Activated B cell treated with CpG ODN at 0.5 μM for 24 hours (primary cell): ENCODE measurements at regions of chr14 and their contacts with region 1.

Region 1: DNA sequence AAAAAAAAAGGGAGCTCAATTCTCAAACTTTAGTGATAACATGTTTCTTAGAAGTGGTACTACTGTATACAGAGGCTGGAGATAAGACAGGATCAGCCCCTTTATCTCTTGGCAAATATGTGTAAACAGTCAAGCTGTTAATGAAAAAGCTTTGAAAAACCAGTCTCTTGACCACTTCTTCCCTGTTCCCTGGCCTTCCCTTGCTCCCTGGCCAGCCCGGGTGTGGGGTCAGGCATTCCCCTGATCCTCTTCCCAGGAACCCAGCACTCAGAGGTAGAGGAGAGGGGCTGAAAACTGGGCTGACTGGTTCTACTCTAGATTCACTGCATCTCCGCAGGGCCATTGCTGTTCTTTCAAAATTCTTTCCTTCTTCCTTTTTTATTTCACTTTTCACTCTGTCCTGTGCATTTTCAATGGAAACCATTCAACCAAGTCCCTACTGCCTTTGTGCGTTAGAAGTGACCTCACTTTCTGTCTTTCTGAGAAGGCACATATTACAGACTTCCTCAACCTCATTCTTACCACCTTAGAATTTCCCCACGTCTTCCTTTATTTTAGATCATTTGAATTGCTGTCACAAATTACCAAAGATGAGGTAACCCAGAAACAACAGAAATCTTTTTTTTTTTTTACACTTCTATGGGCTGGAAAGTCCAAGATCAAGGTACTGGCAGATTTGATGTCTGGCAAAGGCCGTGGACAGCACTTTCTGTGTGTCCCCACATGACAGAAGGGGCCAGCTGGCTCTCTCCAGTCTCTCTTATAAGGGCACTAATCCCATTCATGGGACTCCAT is 5.7 kb downstream of the GNG2 start:
- DNase-seq: no peak
- ATAC-seq: peak; percentile 71
- H3K4me3 Mint-ChIP-seq: no peak overlapping the region
- H3K27ac Mint-ChIP-seq: no peak overlapping the region
- H3K4me1 Mint-ChIP-seq: peaks cover 36% of the 10 kb centered on the region
- H3K27me3 Mint-ChIP-seq: no peaks in the 10 kb centered on the region
- CTCF ChIP-seq: no peak

Region 2: GRCh38 chr14:51880835-51881580 is 14.9 kb after region 1 on chr14:
- CTCF ChIA-PET with region 1: no interaction called
- POLR2A ChIA-PET with region 1: interaction called, 27 read pairs
- intact Hi-C with region 1: loop called (anchors 1 kb)
- DNase-seq: no peak
- ATAC-seq: peak; percentile 48
- H3K4me3 Mint-ChIP-seq: peak overlapping the region; percentile 19
- H3K27ac Mint-ChIP-seq: peak overlapping the region; percentile 69
- H3K4me1 Mint-ChIP-seq: peaks cover 81% of the 10 kb centered on the region
- H3K27me3 Mint-ChIP-seq: no peaks in the 10 kb centered on the region
- CTCF ChIP-seq: no peak

Region 3: DNA sequence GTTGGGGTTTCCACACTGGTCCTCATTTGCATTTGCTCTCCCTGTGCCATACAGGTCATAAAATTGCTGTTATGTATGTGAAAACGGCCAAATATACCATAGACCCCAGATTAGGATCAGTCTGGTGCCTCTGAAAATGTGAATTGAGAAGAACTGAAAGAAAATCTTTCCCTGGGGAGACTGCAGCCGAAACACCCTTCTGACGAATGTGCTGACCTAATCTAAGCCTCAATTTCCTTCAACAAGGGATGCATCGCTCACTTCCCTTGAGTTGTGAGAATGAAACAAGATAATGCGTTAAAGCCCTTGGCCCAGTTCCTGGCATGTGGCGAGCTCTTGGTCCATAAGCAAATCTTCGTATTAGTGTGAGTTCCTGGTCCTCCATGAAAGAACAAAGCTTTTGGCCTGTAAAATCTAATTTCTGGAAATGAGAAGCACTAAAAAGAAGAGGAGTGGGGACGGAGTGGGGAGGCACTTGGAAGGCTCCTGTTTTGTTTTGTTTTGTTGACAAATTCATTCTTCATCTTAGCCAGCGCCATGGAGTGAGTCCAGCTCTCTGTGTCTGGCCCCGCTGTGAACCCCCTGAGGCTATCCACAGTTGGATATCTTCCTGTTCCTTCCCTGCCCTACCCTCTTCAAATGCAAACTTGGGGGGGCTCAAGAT is 73.7 kb after region 1 on chr14:
- CTCF ChIA-PET with region 1: interaction called, 3 read pairs
- POLR2A ChIA-PET with region 1: no interaction called
- intact Hi-C with region 1: loop called (anchors 2 kb)
- DNase-seq: no peak
- ATAC-seq: peak; percentile 85
- H3K4me3 Mint-ChIP-seq: peak overlapping the region; percentile 54
- H3K27ac Mint-ChIP-seq: peak overlapping the region; percentile 85
- H3K4me1 Mint-ChIP-seq: peaks cover 31% of the 10 kb centered on the region
- H3K27me3 Mint-ChIP-seq: no peaks in the 10 kb centered on the region
- CTCF ChIP-seq: no peak